Cardiac septum (tissue), 1 donor: ENCODE measurements at regions of chr16 and their contacts with region 1.

Region 1: GRCh38 chr16:3793161-3793576 is 75.8 kb upstream of the TRAP1 start:
- DNase-seq: no peak

Region 2: GRCh38 chr16:3780570-3780969 is 12.6 kb before region 1 on chr16:
- intact Hi-C with region 1: no loop called
- DNase-seq: no peak

Region 3: DNA sequence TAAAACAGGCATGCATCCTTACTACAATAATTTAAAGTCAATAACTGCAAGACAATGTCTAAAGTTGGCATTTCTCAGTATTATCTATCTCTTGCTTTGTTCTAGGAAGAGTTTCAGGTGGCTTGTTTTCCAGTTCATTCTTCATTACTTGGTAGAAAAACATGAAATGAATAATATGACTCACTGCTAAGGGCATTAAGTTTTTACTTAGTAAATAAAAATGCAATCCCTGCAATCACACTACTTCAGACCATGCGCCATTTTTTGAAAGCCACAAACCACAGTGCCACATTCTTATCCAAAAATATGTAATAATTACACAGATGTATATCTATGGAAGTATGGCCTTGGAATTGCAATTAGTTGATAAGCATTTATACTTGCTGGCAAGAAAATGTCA is 31.9 kb after region 1 on chr16:
- intact Hi-C with region 1: loop called (anchors 5 kb)
- DNase-seq: no peak

Region 4: GRCh38 chr16:3835089-3835602 is 42.0 kb after region 1 on chr16:
- intact Hi-C with region 1: no loop called
- DNase-seq: no peak

Region 5: GRCh38 chr16:3873482-3874173 is 80.5 kb after region 1 on chr16:
- intact Hi-C with region 1: loop called (anchors 5 kb)
- DNase-seq: no peak